ENCODE measurements at regions of chr10 and their contacts with region 1.

Region 1: DNA sequence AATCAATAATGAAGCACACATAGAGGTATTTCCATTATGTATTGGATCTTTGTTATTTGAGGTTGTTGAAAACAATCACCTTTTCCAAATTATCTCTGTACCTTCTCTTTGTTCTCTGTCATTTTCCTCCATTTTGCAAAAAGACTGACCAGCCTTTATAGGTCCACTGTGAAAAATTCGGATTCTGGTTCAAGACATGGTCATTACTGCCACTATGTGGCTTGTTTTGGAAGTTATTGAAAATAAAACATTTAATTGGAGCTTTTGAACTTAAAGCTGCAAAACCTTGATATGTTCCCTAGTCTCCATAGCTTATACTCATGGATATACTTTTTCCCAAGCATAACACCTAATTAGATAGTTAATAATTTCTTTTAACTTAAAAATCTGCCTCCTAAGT is 1094.4 kb downstream of the NRG3 start:
- DNase-seq: no peak
- H3K4me3 Mint-ChIP-seq: no peak overlapping the region
- H3K27ac Mint-ChIP-seq: no peak overlapping the region
- H3K4me1 Mint-ChIP-seq: no peaks in the 10 kb centered on the region
- H3K27me3 Mint-ChIP-seq: no peaks in the 10 kb centered on the region

Region 2: GRCh38 chr10:82796510-82796909 is 172.9 kb before region 1 on chr10:
- CTCF ChIA-PET with region 1: no interaction called
- intact Hi-C with region 1: loop called (anchors 5 kb)
- DNase-seq: no peak
- H3K4me3 Mint-ChIP-seq: no peak overlapping the region
- H3K27ac Mint-ChIP-seq: no peak overlapping the region
- H3K4me1 Mint-ChIP-seq: no peaks in the 10 kb centered on the region
- H3K27me3 Mint-ChIP-seq: no peaks in the 10 kb centered on the region